Calu3 (cell line): ENCODE measurements at regions of chr21 and their contacts with region 1.

Region 1: DNA sequence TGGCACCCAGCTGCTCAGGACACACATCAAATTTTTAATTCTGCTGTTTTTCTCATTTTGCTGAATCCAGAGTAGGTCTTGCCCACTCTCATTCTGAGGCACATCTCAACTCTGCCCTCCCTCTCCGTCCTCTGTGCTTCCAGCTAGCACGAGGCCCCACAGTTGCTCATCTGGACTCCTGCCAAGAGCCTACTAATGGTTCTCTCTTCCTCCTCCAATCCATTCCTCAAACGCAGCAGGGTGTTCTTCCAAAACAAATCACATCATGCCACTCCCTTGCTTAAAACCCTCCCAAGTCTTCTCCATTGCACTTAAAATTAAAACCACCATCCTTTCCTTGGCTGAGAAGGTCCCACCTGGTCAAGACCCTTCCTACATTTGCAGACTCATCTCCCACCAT is 49.8 kb upstream of the SCAF4 start:
- DNase-seq: no peak
- H3K4me3 Mint-ChIP-seq: no peak overlapping the region
- H3K27ac Mint-ChIP-seq: no peak overlapping the region
- H3K4me1 Mint-ChIP-seq: peaks cover 11% of the 10 kb centered on the region
- H3K27me3 Mint-ChIP-seq: peaks cover 30% of the 10 kb centered on the region
- CTCF ChIP-seq: no peak

Region 2: GRCh38 chr21:31731802-31732596 is 49.7 kb before region 1 on chr21 and contains the start of gene SCAF4:
- CTCF ChIA-PET with region 1: no interaction called
- intact Hi-C with region 1: no loop called
- DNase-seq: peak; percentile 84
- H3K4me3 Mint-ChIP-seq: no peak within 1 kb of the TSS
- H3K27ac Mint-ChIP-seq: peak within 1 kb of the TSS; percentile 16
- H3K4me1 Mint-ChIP-seq: no peaks in the 10 kb centered on the region
- H3K27me3 Mint-ChIP-seq: no peaks in the 10 kb centered on the region
- CTCF ChIP-seq: no peak
- total RNA-seq, gene SCAF4: 30.8 and 31.2 TPM in 2 replicates

Region 3: DNA sequence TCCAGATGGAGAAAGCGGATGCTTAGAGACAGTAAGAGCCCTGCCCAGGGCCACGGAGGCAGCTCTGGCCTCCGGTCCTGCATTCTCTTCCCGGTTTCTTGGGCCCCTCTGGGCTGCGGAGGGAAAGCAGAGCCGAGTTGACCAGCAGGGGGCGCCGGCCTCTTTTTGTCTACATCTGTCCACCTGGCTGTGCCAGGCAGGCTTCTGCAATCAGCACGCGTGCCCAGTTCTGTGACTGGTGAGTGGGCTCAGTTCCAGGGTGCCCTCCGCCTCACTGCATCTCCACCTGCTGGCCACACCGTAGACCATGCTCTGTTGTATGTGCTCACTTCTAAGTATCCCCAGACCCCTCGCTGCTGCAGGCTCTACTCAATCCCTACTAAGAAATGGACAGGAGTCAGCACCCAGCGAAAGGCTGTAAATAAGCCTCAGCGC is 84.4 kb after region 1 on chr21:
- CTCF ChIA-PET with region 1: interaction called, 4 read pairs
- intact Hi-C with region 1: loop called (anchors 10 kb)
- DNase-seq: peak; percentile 89
- H3K4me3 Mint-ChIP-seq: no peak overlapping the region
- H3K27ac Mint-ChIP-seq: no peak overlapping the region
- H3K4me1 Mint-ChIP-seq: no peaks in the 10 kb centered on the region
- H3K27me3 Mint-ChIP-seq: peaks cover 9% of the 10 kb centered on the region
- CTCF ChIP-seq: peak; percentile 77